Right cardiac atrium (tissue), 5 donors: ENCODE measurements at regions of chr2 and their contacts with region 1.

Region 1: GRCh38 chr2:11411768-11412448 is 54.1 kb downstream of the E2F6 start:
- DNase-seq: peak in 2 of 3 donors; percentile 56 to 69
- ATAC-seq: peak; percentile 70 to 73
- H3K4me3 ChIP-seq: peak overlapping the region; percentile 37
- H3K27ac ChIP-seq: no peak overlapping the region
- H3K4me1 ChIP-seq: no peaks in the 10 kb centered on the region
- H3K27me3 ChIP-seq: no peaks in the 10 kb centered on the region

Region 2: GRCh38 chr2:11129598-11130449 is 282.1 kb before region 1 on chr2:
- intact Hi-C with region 1: loop called in 2 of 4 experiments (anchors 5 to 10 kb)
- DNase-seq: peak; percentile 56 to 81 (median 81)
- ATAC-seq: peak; percentile 51 to 58
- H3K4me3 ChIP-seq: peak overlapping the region; percentile 34
- H3K27ac ChIP-seq: no peak overlapping the region
- H3K4me1 ChIP-seq: no peaks in the 10 kb centered on the region
- H3K27me3 ChIP-seq: no peaks in the 10 kb centered on the region

Region 3: DNA sequence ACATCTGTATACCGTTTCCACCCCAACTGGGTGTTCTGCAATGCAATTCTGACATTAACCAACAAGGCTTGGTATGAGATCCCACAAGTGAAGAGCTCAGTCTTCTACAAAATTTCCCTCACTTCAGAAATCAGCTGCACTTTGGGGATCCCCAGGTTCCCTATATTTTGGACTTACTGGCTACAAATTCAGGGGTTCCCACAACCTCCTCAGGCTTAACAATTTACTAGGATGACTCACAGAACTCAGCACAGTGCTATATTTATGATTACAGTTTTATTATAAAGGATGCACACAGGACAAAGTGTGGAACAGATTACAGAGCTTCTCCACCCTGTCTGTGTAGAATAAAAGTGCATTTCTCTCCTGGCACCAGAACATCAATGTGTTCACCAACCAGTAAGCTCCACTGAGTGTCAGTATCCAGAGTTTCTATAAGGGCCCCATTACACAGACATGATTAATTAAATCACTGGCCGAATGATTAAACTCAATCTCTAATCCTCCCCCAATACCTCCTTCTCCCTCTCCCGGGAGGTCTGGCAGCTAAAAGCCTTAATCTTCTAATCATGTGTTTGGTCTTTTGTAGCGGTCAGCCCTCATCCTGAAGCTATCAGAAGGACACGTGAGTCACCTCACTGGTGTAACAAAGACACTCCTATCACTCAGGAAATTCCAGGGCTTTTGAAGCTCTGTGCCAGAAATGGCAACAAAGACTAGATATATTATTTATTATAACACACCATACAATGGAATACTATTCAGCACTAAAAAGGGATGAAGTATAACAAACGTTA is 172.0 kb before region 1 on chr2:
- intact Hi-C with region 1: loop called in 2 of 4 experiments (anchors 2 to 5 kb)
- DNase-seq: no peak
- ATAC-seq: peak in 1 of 2 donors; percentile 87
- H3K4me3 ChIP-seq: no peak overlapping the region
- H3K27ac ChIP-seq: no peak overlapping the region
- H3K4me1 ChIP-seq: no peaks in the 10 kb centered on the region
- H3K27me3 ChIP-seq: no peaks in the 10 kb centered on the region

Region 4: DNA sequence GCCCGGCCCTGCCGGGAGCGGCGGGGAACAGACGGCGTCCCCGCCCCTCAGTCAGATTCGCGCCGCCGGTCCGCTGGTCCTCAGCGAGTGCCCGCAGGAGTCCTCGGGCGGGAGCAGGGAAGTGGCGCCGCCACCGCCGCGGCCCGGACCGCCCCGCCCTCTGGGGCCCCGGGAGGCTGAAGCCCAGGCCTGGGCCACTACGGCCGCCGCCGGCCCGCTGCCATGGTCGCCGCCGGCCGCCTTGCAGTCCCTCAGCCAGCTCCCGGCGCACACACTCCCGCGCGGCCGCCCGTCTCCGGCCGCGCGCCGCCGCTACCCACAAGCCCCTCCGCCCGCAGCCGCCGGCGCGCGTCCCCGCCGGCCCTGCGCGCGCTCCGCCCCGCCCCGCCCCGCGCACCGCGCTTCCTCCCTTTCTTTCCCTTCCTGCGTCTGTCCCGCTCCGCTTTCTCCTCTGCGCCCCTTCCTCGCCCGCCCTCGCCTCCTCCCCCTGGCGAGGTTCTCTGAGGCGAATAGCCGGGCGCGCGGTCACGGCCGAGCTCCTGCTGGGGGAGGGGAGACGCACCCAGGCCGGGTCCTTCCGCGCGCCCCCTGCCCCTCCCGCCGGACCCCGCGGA is 67.5 kb before region 1 on chr2 and contains the start of gene ROCK2:
- intact Hi-C with region 1: loop called in 2 of 4 experiments (anchors 5 to 10 kb)
- DNase-seq: peak; percentile 88 to 96 (median 95)
- ATAC-seq: peak; percentile 80 to 88
- H3K4me3 ChIP-seq: peak within 1 kb of the TSS; percentile 98
- H3K27ac ChIP-seq: peak within 1 kb of the TSS; percentile 100
- H3K4me1 ChIP-seq: no peaks in the 10 kb centered on the region
- H3K27me3 ChIP-seq: no peaks in the 10 kb centered on the region
- total RNA-seq, gene ROCK2: 40.2 to 60.7 (median 40.9) TPM

Region 5: GRCh38 chr2:11710234-11710975 is 298.5 kb after region 1 on chr2:
- intact Hi-C with region 1: no loop called
- DNase-seq: no peak
- ATAC-seq: peak; percentile 42 to 71
- H3K4me3 ChIP-seq: no peak overlapping the region
- H3K27ac ChIP-seq: no peak overlapping the region
- H3K4me1 ChIP-seq: no peaks in the 10 kb centered on the region
- H3K27me3 ChIP-seq: no peaks in the 10 kb centered on the region